Caco-2 (cell line): ENCODE measurements at regions of chr11 and their contacts with region 1.

Region 1: DNA sequence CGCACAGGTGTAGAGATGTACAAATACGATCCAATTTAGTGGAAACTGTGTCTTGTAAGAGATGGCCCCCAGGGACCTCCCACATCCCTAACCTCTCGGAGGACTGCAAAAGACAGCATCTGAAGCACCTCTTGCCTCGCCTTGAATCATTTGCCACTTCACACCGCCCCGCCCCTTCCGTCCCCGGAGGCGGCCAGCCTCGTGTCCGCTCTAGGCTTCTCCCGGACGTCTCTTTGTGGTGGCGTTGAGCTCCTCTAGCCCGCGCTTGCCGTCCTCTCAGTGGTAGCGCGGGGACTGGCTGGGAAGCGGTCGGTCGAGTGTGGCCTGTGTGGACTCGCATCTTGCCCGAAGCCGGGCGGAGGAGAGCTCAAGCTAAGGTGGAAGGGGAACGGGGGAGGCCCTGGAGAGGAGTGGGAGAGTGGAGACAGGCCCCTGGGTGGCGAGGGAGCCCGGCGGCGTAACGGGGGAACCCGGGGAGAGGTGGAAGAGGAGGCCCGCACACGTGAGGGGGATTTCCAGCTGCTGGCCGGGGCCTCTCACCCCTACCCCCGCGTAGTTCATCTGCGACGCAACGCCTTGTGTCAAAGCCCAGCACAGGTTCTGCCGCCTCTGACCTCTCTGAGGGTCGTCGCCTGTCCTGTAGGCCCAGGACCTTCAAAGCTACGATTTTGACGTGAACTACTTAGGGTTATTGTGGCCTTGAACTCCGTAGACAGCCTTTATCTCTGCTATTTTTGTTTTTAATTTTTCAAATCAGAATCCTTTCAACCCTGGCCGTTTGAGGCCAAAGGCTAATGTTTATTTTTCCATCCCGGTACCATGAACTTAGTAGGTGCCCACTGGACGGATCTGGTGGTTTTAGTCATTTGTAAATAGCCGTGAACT is at the start of gene ARL14EP:
- DNase-seq: peak; percentile 95
- H3K4me3 ChIP-seq: peak within 1 kb of the TSS; percentile 71
- H3K4me3 Mint-ChIP-seq: peak within 1 kb of the TSS; percentile 100
- H3K27ac Mint-ChIP-seq: peak within 1 kb of the TSS; percentile 100
- H3K4me1 ChIP-seq: no peaks in the 10 kb centered on the region
- H3K4me1 Mint-ChIP-seq: peaks cover 6% of the 10 kb centered on the region
- H3K27me3 ChIP-seq: no peaks in the 10 kb centered on the region
- H3K27me3 Mint-ChIP-seq: peaks cover 8% of the 10 kb centered on the region
- CTCF ChIP-seq: no peak
- total RNA-seq, gene ARL14EP: 21.5 and 24.5 TPM in 2 replicates

Region 2: DNA sequence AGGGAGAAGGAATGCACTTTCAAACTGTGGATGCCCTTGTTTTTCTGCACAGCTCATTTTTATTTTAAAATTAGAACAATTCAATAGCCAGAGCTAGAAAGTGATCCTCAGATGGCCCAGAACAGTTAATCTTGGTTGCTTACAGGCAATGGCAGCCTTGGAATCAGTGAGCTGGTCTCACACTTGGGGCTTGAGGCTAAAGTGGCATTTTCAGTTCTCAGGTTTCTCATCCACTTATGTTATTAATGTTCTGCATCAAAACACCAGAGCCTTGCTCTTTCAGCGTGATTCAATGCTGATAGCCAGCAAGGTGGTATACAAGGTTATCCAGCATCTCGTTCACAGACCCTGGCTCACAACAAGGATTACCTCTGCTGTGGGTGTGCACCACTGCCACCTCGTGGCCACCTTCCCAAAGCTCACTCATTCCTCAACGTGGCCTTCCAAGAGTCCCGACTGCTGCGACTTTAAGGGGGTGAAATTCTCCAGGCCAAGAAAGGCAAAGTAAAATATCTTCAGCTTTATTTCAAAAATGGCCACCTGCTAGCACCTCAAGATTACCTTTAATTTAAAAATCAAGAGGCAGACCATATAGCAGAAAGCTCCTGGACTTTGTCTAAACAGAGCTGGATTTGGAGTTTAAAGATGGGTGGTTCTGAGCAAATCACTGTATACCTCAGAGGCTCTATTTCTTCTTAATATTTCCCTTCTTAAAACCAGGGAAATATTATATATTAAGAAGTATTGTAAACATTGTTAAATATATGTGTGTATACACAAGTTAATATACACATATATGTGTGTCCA is 126.5 kb before region 1 on chr11:
- CTCF ChIA-PET with region 1: no interaction called
- POLR2A ChIA-PET with region 1: no interaction called
- intact Hi-C with region 1: loop called (anchors 5 kb)
- DNase-seq: peak; percentile 65 to 70
- H3K4me3 ChIP-seq: no peak overlapping the region
- H3K4me3 Mint-ChIP-seq: no peak overlapping the region
- H3K27ac Mint-ChIP-seq: no peak overlapping the region
- H3K4me1 ChIP-seq: no peaks in the 10 kb centered on the region
- H3K4me1 Mint-ChIP-seq: no peaks in the 10 kb centered on the region
- H3K27me3 ChIP-seq: no peaks in the 10 kb centered on the region
- H3K27me3 Mint-ChIP-seq: no peaks in the 10 kb centered on the region
- CTCF ChIP-seq: peak; percentile 75 to 88

Region 3: GRCh38 chr11:30535818-30536217 is 212.8 kb after region 1 on chr11:
- CTCF ChIA-PET with region 1: no interaction called
- POLR2A ChIA-PET with region 1: no interaction called
- intact Hi-C with region 1: no loop called
- DNase-seq: no peak
- H3K4me3 ChIP-seq: no peak overlapping the region
- H3K4me3 Mint-ChIP-seq: no peak overlapping the region
- H3K27ac Mint-ChIP-seq: no peak overlapping the region
- H3K4me1 ChIP-seq: no peaks in the 10 kb centered on the region
- H3K4me1 Mint-ChIP-seq: no peaks in the 10 kb centered on the region
- H3K27me3 ChIP-seq: no peaks in the 10 kb centered on the region
- H3K27me3 Mint-ChIP-seq: peaks cover 2% of the 10 kb centered on the region
- CTCF ChIP-seq: no peak